ENCODE measurements at regions of chr19 and their contacts with region 1.

Region 1: DNA sequence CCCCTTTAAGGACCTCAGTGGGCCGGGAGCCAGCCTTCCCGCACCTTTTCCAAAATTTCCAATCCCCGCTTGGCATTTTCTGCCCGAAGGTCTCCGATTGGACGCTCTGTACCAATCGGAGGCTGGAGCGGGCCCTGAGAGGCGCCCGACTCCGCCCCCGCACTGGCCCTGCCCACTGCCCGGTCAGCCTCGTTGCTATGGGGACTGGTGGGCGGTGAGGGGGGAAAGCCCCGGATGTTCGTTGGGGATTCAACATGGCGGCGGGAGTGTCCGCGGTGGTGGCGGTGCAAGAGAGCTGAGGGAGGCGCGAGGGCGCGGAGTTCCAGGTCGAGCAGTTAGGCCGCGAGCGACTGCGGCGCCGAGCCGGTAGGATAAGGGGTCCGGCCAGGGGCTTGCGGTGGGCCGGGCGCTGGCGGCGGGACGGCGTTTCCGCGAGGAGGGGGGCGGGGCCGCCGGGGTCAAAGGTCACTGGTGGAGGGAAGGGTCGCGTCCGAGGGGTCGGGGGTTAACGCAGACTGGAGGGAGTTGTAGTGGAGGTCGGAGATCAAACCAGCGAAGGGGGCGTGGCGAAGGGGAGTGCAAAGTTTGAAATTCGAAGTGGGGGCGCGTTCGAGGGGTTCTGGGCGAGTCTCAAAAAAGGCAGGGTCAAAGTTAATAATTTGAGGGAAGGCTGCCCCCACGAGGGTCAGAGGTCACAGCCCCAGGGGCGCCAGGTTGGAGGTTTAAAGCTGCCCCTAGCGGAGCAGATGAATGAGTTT is at the start of gene PAK4:
- DNase-seq: peak; percentile 96
- ATAC-seq: peak; percentile 86
- H3K4me3 ChIP-seq: peak within 1 kb of the TSS; percentile 96 to 99
- H3K27ac ChIP-seq: peak within 1 kb of the TSS; percentile 84
- H3K4me1 ChIP-seq: peaks cover 16 to 55% of the 10 kb centered on the region in 2 experiments
- H3K27me3 ChIP-seq: no peaks in the 10 kb centered on the region
- CTCF ChIP-seq: no peak
- POLR2A ChIP-seq: peak; percentile 51
- RAD21 ChIP-seq: no peak
- total RNA-seq, gene PAK4: 90.1 TPM

Region 2: DNA sequence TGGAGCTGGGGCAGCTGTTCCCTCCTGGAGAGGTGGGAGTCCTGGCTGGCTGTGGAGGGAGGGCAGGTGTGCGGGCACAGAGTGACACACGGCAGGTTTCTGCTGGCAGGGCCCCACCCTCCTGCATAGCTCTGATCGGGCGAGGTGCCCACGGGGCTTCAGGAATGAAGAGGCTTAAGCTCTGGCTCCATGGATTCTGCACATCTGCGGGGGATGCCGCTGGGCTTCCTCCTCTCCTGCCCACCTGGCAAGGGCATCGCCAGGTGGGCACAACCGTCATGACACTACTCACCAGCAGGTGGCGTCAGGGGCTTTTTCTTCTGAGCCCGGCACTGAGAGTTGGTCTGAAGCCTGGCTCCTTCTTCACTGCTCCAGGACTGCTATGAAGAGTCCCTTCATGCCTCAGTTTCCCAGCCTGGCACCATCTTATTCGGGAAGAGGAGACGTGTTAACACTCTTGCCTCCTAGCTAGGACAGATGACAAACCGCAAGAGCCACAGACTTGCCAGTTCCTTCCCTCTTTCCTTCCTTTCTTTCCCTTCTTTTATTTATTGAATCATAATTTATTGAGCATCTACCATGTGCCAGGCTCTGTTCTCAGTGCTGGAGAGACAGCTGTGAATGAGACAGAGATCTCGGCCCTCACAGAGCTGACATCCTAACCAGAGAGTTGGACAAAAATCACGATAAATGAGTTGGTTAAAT is 15.3 kb before region 1 on chr19:
- CTCF ChIA-PET with region 1: interaction called, 12 read pairs
- POLR2A ChIA-PET with region 1: interaction called, 3 read pairs
- RAD21 ChIA-PET with region 1: no interaction called
- intact Hi-C with region 1: no loop called
- DNase-seq: peak; percentile 41
- ATAC-seq: peak; percentile 78
- H3K4me3 ChIP-seq: no peak overlapping the region
- H3K27ac ChIP-seq: no peak overlapping the region
- H3K4me1 ChIP-seq: peaks cover 17 to 29% of the 10 kb centered on the region in 2 experiments
- H3K27me3 ChIP-seq: no peaks in the 10 kb centered on the region
- CTCF ChIP-seq: peak; percentile 55 to 87 (median 80)
- POLR2A ChIP-seq: no peak
- RAD21 ChIP-seq: peak; percentile 75

Region 3: GRCh38 chr19:39187559-39187957 is 61.8 kb after region 1 on chr19:
- CTCF ChIA-PET with region 1: interaction called, 3 read pairs
- POLR2A ChIA-PET with region 1: no interaction called
- RAD21 ChIA-PET with region 1: interaction called in 1 of 2 experiments, 3 read pairs
- intact Hi-C with region 1: loop called (anchors 1 kb)
- DNase-seq: no peak
- ATAC-seq: peak; percentile 35; the same call in 1 of the 2 replicates
- H3K4me3 ChIP-seq: no peak overlapping the region
- H3K27ac ChIP-seq: no peak overlapping the region
- H3K4me1 ChIP-seq: peaks cover 0 to 6% of the 10 kb centered on the region in 2 experiments; a peak in 1 of 4 replicates
- H3K27me3 ChIP-seq: no peaks in the 10 kb centered on the region
- CTCF ChIP-seq: no peak
- POLR2A ChIP-seq: no peak
- RAD21 ChIP-seq: no peak

Region 4: GRCh38 chr19:39328046-39328705 is 202.4 kb after region 1 on chr19:
- CTCF ChIA-PET with region 1: interaction called, 3 read pairs
- POLR2A ChIA-PET with region 1: interaction called, 3 read pairs
- RAD21 ChIA-PET with region 1: no interaction called
- intact Hi-C with region 1: loop called (anchors 1 kb)
- DNase-seq: no peak
- ATAC-seq: peak; percentile 83
- H3K4me3 ChIP-seq: no peak overlapping the region
- H3K27ac ChIP-seq: no peak overlapping the region
- H3K4me1 ChIP-seq: peaks cover 0 to 12% of the 10 kb centered on the region in 2 experiments; a peak in 1 of 4 replicates
- H3K27me3 ChIP-seq: no peaks in the 10 kb centered on the region
- CTCF ChIP-seq: peak; percentile 95 to 98 (median 96)
- POLR2A ChIP-seq: no peak
- RAD21 ChIP-seq: peak; percentile 97